ENCODE measurements at regions of chr13 and their contacts with region 1.

Region 1: DNA sequence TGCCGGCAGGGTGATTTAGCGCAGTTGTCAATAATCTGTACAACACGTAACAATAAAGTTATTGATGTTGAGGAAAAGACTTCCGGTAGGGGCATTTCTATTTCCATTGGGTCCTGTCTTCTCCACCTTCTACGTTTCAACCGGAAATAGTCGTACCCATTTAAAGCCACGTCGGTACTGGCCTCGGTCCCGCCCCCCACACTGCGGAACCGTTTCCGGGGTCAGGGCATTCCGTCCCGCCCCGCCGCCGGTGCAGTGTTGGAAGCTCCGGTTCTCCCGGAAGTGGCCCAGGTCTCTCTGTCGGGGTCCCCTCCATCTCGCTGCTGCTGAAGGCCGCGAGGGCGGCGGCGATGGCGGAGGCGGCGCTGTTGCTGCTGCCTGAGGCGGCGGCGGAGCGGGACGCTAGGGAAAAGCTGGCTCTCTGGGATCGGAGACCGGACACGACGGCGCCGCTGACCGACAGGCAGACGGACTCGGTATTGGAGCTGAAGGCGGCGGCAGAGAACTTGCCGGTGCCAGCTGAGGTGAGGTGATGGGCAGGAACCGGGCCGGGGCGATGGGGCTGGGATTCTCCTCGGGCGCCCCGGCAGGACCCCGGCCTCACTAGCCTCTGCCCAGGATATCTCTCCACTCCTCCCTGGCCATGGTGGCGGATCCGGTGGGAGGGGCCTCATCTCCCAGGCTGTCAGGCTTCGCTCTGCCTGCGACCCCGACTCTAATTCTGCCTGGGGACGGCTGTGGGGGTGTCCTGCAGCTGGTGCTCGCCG is at the start of gene COG3:
- DNase-seq: peak; percentile 95
- H3K4me3 ChIP-seq: peak within 1 kb of the TSS; percentile 74 to 98 (median 97)
- H3K27ac ChIP-seq: peak within 1 kb of the TSS; percentile 78 to 89 (median 84)
- H3K4me1 ChIP-seq: peaks cover 26 to 28% of the 10 kb centered on the region in 2 donors
- H3K27me3 ChIP-seq: no peaks in the 10 kb centered on the region
- CTCF ChIP-seq: peak in 1 of 6 experiments; percentile 69
- POLR2A ChIP-seq: peak in 1 of 2 donors; percentile 70
- total RNA-seq, gene COG3: 35.9 to 56.0 (median 45.0) TPM

Region 2: DNA sequence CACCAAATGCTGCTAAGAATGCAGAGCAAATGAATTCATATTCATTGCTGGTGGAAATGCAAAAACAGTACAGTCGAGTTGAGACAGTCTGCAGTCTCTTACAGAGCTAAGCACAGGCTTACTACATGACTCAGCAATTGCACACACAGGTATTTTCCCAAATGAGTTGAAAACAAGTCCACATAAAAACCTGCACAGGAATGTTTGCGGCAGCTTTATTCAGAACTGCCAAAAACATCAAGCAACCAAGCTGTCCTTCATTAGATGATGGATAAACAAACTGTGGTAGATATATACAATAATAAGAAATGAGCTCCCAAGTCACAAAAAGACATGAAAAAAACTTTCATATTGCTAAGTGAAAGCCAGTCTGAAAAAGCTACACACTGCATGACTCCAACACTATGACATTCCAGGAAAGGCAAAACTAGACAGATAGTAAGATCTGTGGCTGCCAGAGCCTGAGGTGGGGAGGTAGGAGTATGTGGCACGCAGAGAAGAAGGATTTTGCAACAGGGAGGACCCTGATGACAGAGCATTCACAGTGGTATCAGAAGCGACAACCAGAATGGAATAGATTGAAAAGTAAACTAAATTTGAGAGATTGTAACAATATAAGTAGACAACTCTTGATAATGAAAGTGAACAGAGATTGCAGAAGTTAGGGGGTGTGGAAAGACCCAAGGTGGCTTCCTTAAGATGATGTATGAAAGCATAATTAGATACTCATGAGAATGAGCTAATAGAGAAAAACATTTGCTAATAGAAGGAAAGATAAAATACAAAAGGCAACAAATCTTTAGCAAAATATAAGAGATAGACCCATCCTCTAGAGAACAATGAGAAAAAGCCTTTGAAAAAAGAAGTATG is 941.5 kb before region 1 on chr13:
- intact Hi-C with region 1: no loop called
- DNase-seq: peak in 1 of 2 donors; percentile 17
- H3K4me3 ChIP-seq: no peak overlapping the region
- H3K27ac ChIP-seq: peak overlapping the region; percentile 45 to 70 (median 50)
- H3K4me1 ChIP-seq: peaks cover 0 to 16% of the 10 kb centered on the region in 2 donors
- H3K27me3 ChIP-seq: no peaks in the 10 kb centered on the region
- CTCF ChIP-seq: no peak
- POLR2A ChIP-seq: peak in 1 of 2 donors; percentile 28

Region 3: DNA sequence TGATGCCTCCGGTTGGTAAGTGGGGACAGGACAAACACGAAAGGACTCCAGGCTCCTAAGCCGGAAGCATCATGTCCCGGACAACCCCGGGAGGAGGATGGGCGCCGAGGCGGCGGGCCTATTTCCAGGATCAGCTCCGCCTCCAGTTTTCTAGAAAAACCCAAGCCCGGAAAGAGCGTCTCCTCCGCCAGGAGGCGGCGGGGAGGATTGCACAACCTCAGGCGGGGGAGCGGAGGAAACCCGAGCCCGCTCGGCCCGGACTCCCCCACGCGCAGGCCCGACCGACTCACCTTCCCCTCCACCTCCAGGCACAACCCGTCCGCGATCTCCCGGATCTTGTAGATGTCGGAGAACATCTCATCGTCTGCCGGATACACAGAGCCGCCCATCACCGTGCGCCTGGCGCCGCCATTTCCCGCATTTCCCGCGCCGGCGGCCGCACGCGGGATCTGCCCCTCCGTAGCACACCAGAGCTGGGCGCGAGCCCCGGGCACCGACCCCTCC is 124.4 kb before region 1 on chr13:
- intact Hi-C with region 1: loop called (anchors 10 kb)
- DNase-seq: peak; percentile 90 to 93
- H3K4me3 ChIP-seq: peak overlapping the region; percentile 57 to 99 (median 89)
- H3K27ac ChIP-seq: peak overlapping the region; percentile 99 to 100 (median 100)
- H3K4me1 ChIP-seq: peaks cover 19 to 46% of the 10 kb centered on the region in 2 donors
- H3K27me3 ChIP-seq: no peaks in the 10 kb centered on the region
- CTCF ChIP-seq: peak in 5 of 6 experiments; percentile 25 to 63 (median 56)
- POLR2A ChIP-seq: peak in 1 of 2 donors; percentile 28

Region 4: DNA sequence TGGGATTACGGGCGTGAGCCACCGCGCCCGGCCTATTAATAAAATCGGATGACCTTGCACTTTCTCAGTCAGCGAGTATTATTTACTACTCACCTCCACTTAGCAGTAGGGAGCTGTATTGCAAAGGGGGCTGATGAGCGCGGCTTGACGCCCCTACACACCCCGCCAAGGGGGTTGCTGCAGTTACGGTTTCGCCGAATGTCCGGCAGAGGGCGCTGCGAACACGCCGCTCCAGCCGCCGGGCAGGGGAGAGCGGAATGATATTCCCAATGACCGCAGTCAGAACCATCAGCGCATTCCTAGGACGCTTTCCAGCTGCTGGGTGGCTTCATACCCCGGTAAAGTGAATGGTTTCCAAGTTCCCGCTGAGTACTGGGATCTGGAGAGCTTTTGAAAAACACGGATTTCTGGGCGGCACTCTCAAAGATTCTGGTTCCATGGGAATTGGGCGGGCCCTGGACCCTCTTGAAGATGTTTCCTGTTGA is 93.9 kb before region 1 on chr13:
- intact Hi-C with region 1: loop called (anchors 10 kb)
- DNase-seq: peak; percentile 67 to 80
- H3K4me3 ChIP-seq: no peak overlapping the region
- H3K27ac ChIP-seq: no peak overlapping the region
- H3K4me1 ChIP-seq: peaks cover 4 to 16% of the 10 kb centered on the region in 2 donors
- H3K27me3 ChIP-seq: no peaks in the 10 kb centered on the region
- CTCF ChIP-seq: peak; percentile 79 to 98 (median 92)
- POLR2A ChIP-seq: no peak

Region 5: GRCh38 chr13:45417790-45418534 is 46.9 kb before region 1 on chr13 and contains the start of gene SLC25A30:
- intact Hi-C with region 1: loop called (anchors 2 kb)
- DNase-seq: peak; percentile 98 to 99
- H3K4me3 ChIP-seq: peak within 1 kb of the TSS; percentile 31 to 62 (median 36)
- H3K27ac ChIP-seq: peak within 1 kb of the TSS; percentile 87 to 94 (median 90)
- H3K4me1 ChIP-seq: peaks cover 18 to 21% of the 10 kb centered on the region in 2 donors
- H3K27me3 ChIP-seq: no peaks in the 10 kb centered on the region
- CTCF ChIP-seq: no peak
- POLR2A ChIP-seq: peak in 1 of 2 donors; percentile 92
- total RNA-seq, gene SLC25A30: 11.3 to 16.1 (median 15.9) TPM

Measured in thyroid gland (tissue), 4 donors.